ENCODE measurements at regions of chr4 and their contacts with region 1.

Region 1: DNA sequence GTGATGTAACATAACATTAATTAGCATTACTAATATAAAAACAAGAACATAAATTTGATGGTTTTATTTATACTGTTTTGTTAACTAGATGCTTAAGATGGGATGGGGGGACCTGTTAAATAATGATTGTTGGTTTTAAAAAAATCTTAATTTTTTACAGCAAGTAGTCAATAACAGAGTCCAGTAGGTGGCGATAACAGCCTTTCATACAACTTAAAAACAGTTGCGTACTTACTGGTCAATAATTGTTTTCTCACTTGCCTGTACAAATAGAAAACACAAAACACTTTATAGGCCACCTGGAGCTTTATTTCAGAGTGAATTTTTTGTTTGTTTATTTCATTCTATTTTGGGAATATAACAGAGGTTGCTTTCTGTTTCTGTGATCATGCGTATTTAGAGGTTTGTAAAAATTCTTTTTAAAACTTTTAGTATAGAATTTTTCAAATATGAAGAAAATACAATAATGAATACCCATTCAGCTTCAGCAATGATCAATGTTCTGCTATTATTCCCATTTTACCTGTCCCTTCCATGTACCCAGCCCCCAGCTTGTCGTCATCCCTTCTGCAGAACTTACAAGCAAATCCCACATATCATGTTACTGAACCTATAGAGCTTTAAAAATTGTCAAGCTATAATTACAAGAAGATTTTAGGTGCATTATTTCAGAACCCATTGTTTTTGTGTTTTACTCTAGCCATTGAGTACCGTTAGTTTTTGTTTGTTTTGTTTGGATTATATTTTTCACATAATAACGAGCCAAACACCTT is 97.1 kb downstream of the MRPL1 start:
- DNase-seq: no peak
- H3K4me3 ChIP-seq: no peak overlapping the region
- H3K27ac ChIP-seq: no peak overlapping the region
- H3K4me1 ChIP-seq: no peaks in the 10 kb centered on the region
- H3K27me3 ChIP-seq: no peaks in the 10 kb centered on the region
- CTCF ChIP-seq: peak; percentile 33 to 65 (median 55)
- POLR2A ChIP-seq: no peak

Region 2: DNA sequence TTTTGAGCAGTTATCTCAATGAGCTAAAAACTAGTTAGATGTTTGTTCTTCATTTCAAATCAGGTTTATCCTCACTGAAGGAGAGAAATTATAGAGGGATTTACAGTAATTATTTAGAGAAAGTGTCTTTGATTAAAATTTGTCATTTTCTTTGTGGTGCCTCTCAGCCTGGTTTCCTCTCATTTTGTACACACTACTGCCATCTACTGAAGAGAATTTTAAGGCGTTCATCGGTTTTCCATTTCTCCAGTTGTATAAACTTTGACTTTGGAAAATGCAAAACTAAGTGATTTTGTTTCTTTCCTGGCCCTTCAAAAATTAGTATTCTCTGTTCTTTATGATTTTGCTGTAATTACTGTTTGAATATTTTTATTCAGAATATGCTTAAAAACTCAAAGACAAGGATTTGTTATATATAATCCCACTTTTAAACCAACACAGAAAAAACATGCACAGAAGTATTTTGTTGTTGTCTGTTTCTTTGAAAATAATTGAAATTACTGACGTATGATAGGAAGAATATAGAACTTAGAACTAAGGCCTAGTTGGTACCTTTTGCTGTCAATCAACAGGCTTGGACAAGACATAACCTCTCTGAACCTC is 557.4 kb after region 1 on chr4:
- intact Hi-C with region 1: loop called (anchors 10 kb)
- DNase-seq: no peak
- H3K4me3 ChIP-seq: no peak overlapping the region
- H3K27ac ChIP-seq: no peak overlapping the region
- H3K4me1 ChIP-seq: no peaks in the 10 kb centered on the region
- H3K27me3 ChIP-seq: no peaks in the 10 kb centered on the region
- CTCF ChIP-seq: peak in 2 of 3 experiments; percentile 51 to 58
- POLR2A ChIP-seq: no peak

Measured in vagina (tissue), 2 donors.